PC-9 (cell line): ENCODE measurements at regions of chr2 and their contacts with region 1.

Region 1: DNA sequence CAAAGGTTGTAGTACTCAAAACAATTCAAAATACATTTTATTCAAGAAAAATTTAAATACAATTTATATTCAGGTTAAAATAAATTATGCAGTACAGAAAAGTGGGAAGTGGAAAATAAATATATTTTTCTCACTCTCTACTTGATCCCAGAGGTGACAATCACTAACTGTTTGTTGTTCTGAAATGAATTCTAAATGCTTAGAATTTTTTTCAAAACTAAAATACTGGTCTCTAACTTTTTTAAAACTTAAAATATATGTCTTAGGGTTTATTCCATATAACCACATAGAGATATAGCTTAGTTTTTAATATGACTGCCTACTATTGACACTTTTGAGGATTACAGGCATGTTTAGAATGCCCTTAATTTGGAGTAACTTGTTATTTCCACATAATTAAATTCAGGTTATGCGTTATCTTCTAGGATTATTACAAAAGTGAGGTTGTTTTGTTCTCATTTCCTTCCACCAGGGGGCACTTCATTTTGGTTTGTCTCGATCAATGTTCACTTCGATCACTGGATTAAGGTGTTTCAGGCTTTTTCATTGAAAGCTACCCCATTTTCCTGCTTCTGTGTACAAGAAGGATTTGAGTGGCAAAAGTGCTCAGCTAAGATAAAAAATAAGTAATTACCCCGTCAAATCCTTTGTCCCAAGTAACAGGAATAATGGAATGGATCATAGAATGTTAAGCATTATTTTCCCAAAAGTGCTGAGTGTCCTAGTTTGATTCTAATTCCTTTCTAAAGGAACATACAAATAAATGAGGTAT is 27.1 kb upstream of the TFPI start:
- DNase-seq: peak; percentile 6 to 34
- H3K4me3 ChIP-seq: no peak overlapping the region
- H3K27ac ChIP-seq: no peak overlapping the region
- H3K4me1 ChIP-seq: no peaks in the 10 kb centered on the region
- H3K27me3 ChIP-seq: no peaks in the 10 kb centered on the region
- CTCF ChIP-seq: peak; percentile 75

Region 2: GRCh38 chr2:187168720-187169713 is 412.3 kb before region 1 on chr2:
- CTCF ChIA-PET with region 1: no interaction called
- POLR2A ChIA-PET with region 1: no interaction called
- intact Hi-C with region 1: no loop called
- DNase-seq: no peak
- H3K4me3 ChIP-seq: no peak overlapping the region
- H3K27ac ChIP-seq: no peak overlapping the region
- H3K4me1 ChIP-seq: no peaks in the 10 kb centered on the region
- H3K27me3 ChIP-seq: no peaks in the 10 kb centered on the region
- CTCF ChIP-seq: no peak

Region 3: GRCh38 chr2:187499941-187500532 is 81.3 kb before region 1 on chr2:
- CTCF ChIA-PET with region 1: interaction called, 13 read pairs
- POLR2A ChIA-PET with region 1: no interaction called
- intact Hi-C with region 1: loop called (anchors 1 kb)
- DNase-seq: peak in 1 of 2 experiments; percentile 40
- H3K4me3 ChIP-seq: no peak overlapping the region
- H3K27ac ChIP-seq: no peak overlapping the region
- H3K4me1 ChIP-seq: no peaks in the 10 kb centered on the region
- H3K27me3 ChIP-seq: no peaks in the 10 kb centered on the region
- CTCF ChIP-seq: peak; percentile 82

Region 4: GRCh38 chr2:187774551-187775071 is 193.3 kb after region 1 on chr2:
- CTCF ChIA-PET with region 1: no interaction called
- POLR2A ChIA-PET with region 1: no interaction called
- intact Hi-C with region 1: loop called (anchors 10 kb)
- DNase-seq: peak in 1 of 2 experiments; percentile 50
- H3K4me3 ChIP-seq: no peak overlapping the region
- H3K27ac ChIP-seq: peak overlapping the region; percentile 29; the same call in 1 of the 2 replicates
- H3K4me1 ChIP-seq: peaks cover 6% of the 10 kb centered on the region
- H3K27me3 ChIP-seq: no peaks in the 10 kb centered on the region
- CTCF ChIP-seq: no peak

Region 5: DNA sequence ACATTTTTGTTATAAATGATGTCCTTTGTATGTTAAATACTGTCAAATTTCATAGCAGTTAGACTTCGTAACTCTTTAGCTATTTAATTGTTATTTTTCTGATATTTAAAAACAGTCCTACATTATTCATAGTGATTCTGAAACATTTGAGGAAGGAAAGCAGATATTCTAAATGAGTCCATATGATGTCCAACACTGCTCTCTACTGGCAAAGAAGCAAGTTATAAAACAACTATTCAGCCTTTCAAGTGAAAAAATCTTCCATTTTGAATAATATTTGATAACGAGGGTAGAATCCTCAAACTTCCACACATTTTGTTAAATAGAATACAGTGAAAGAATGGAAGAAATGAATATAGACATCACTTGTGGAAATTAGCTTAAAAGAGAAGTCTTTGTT is 931.1 kb after region 1 on chr2:
- CTCF ChIA-PET with region 1: interaction called, 4 read pairs
- POLR2A ChIA-PET with region 1: no interaction called
- intact Hi-C with region 1: loop called (anchors 5 kb)
- DNase-seq: no peak
- H3K4me3 ChIP-seq: no peak overlapping the region
- H3K27ac ChIP-seq: no peak overlapping the region
- H3K4me1 ChIP-seq: no peaks in the 10 kb centered on the region
- H3K27me3 ChIP-seq: no peaks in the 10 kb centered on the region
- CTCF ChIP-seq: peak; percentile 74